ENCODE measurements at regions of chr19 and their contacts with region 1.

Region 1: DNA sequence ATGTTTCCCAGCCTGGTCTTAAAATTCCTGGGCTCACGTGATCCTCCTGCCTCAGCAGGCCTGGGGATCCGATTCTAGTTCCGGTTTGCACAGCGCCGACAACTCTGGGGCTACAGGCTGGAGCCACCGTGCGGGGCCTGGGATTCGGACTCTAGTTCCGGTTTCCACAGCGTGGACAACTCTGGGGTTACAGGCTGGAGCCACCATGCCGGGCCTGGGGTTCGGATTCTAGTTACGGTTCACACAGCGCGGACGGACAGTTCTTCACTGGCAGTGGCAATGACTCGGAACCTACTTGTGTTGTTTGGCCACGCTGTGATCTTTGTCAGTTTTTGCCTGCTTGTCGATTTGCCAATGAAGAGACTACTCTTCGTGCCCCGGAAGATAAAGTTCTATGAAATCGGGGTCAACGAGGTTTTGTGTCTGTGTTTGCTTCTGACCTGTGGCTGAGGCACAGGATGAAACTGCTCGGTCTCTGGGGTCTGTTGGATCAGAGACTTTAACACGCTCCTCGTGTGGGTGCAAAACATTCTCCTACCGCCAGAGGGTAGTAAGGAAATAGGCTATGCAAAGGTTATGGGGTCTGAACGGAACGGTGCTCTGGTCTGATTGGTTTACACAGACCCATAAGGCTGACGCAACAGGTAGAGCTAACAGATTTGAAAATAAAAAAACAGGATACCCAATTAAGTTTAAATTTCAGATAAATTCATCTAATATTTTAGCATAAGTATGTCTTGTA is 12.1 kb upstream of the ZSCAN1 start:
- DNase-seq: peak; percentile 16 to 42
- ATAC-seq: no peak

Region 2: GRCh38 chr19:58084596-58085347 is 63.1 kb after region 1 on chr19:
- intact Hi-C with region 1: no loop called
- DNase-seq: no peak
- ATAC-seq: no peak

Region 3: GRCh38 chr19:58154679-58155648 is 133.3 kb after region 1 on chr19:
- intact Hi-C with region 1: loop called in 1 of 2 experiments (anchors 5 kb)
- DNase-seq: peak; percentile 92 to 99
- ATAC-seq: peak; percentile 95

Measured in left colon (tissue), 2 donors.